WTC11 (cell line): ENCODE measurements at regions of chr5 and their contacts with region 1.

Region 1: DNA sequence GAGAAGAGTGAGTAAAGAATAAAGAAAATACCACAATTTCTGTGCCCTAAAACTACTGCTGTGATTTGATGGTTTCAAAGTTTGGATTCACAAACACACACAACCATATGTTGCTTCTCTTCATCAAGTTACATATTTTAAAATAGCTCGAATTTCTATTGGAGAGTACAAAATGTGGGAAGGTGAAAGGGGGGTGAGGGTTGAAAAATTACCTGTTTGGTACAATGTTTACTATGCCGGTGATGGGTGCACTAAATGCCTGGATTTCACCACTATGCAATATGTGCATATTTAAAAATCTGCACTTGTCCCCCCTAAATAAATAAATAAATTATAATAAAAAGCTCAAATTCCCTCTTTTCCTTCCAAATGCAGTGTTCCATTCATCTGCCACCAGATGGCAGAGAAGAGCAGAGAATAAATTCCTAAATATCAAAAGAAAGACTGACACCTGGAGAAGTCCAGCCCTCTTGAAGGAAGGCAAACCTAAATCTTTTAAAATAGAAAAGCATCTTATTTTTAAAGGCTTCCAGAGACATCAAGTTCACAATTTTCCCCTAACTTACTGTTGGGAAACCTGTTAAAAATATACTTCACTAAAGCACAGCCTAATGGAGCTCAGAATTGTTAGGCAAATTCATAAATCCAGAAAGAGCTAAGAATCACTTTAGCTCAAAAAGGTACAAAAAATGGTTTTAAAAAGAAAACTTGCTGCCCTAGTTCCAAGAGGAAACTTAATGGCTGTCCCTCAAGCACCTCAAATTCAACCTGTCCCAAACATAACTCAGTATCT is 24.8 kb upstream of the HNRNPA0 start:
- DNase-seq: no peak
- ATAC-seq: no peak
- H3K4me3 Mint-ChIP-seq: no peak overlapping the region
- H3K27ac Mint-ChIP-seq: no peak overlapping the region
- H3K4me1 Mint-ChIP-seq: no peaks in the 10 kb centered on the region
- H3K27me3 Mint-ChIP-seq: peaks cover 9% of the 10 kb centered on the region
- CTCF ChIP-seq: peak; percentile 57

Region 2: DNA sequence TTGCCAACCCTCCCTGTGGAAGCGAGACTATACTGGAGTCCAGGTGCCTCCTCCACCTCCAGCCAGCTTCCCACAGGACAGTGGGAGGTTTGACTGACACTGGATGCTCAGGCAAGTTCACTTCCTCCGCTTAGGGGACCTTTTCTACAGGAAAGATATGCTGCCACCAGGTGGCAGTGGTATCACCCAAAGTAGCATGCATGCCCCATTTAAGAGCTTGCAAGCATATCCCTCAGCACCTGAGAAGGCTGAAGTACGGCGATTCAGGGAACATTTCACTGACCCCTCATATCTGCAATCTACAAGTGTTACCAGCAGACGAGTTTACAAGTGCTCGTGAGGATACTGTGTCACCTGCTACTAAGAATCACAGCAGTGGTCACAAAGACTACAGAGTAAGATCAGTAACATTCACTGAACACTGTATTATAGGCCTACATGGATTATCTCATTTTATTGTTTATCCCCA is 118.6 kb before region 1 on chr5:
- CTCF ChIA-PET with region 1: interaction called, 10 read pairs
- POLR2A ChIA-PET with region 1: no interaction called
- DNase-seq: peak; percentile 82
- ATAC-seq: peak; percentile 97
- H3K4me3 Mint-ChIP-seq: no peak overlapping the region
- H3K27ac Mint-ChIP-seq: no peak overlapping the region
- H3K4me1 Mint-ChIP-seq: no peaks in the 10 kb centered on the region
- H3K27me3 Mint-ChIP-seq: no peaks in the 10 kb centered on the region
- CTCF ChIP-seq: peak; percentile 71; the same call in 1 of the 2 replicates

Region 3: DNA sequence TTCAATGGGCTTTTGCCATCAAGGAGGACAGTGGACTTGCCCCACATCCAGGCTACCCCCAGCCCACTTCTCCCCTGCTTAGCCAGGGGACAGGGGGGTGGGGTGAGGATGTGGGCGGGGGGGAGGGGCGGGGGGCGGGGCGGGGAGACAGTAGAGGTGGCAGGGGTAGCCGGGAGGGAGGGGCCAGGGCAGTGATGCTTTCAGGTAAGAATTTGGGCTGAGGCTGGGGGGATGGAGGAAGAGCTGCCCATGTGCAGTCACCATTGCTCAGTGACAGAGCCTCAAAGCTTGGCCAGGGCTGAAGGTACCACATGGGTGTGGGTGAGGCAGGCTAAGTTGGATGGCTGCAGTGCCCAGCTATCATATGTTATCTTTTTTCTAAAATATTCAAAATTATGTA is 15.9 kb after region 1 on chr5:
- CTCF ChIA-PET with region 1: interaction called, 22 read pairs
- POLR2A ChIA-PET with region 1: no interaction called
- DNase-seq: peak; percentile 44
- ATAC-seq: peak; percentile 93
- H3K4me3 Mint-ChIP-seq: no peak overlapping the region
- H3K27ac Mint-ChIP-seq: no peak overlapping the region
- H3K4me1 Mint-ChIP-seq: no peaks in the 10 kb centered on the region
- H3K27me3 Mint-ChIP-seq: no peaks in the 10 kb centered on the region
- CTCF ChIP-seq: no peak

Region 4: DNA sequence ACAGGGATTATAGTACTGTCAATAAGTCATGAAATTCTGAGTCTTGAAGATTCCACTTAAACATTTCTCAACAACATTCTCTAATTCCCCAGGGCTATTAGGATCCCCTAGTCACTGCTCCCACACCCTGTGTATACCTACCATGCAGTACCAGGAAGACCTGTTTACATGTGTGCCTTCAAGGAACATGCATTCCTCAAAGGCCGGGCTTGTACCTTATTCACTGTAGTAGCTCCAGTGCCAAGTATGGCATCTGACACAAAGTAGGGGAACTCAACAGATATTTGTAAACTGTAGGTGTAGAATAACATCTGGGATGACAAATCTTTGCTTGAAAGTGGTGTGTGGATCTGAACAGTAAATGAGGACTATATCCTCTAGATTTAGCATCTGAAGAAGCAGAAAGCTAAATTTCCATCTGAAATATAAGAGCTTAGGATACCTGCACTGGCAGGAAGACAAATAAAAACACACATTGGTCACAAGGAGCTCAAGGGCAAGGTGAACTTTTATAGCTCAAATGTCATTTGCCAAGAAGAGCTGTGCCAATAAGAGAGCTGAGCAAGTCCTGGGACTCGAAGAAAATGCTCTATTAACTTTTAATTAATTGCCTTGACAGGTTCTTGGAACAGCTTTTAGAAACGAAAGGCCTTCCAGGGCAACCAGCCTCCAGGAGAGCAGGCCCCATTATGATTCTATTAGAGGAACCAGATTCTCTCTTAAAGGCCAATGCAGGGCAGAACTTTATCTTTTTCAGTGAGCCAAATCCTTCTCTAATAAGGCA is 36.4 kb after region 1 on chr5:
- CTCF ChIA-PET with region 1: interaction called, 19 read pairs
- POLR2A ChIA-PET with region 1: no interaction called
- DNase-seq: no peak
- ATAC-seq: no peak
- H3K4me3 Mint-ChIP-seq: no peak overlapping the region
- H3K27ac Mint-ChIP-seq: no peak overlapping the region
- H3K4me1 Mint-ChIP-seq: no peaks in the 10 kb centered on the region
- H3K27me3 Mint-ChIP-seq: no peaks in the 10 kb centered on the region
- CTCF ChIP-seq: no peak

Region 5: DNA sequence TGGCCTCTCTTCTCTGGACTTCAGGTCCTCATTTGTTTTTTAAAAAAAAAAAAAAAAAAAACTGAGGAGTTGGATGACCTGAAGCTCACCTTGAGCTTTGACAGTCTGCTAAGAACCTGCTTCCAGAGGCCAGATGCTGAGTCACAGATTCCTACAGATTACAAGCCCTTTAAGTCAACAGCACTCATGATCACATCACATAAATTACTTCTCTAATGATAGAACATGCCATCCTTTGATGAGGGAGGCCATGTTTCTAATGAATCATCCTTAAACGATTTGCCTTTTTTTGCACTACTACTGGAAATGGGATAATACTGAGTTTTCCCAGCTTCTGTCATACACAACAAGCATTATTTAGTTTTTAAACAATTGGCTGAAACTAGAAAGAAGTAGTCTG is 54.5 kb after region 1 on chr5:
- CTCF ChIA-PET with region 1: interaction called, 14 read pairs
- POLR2A ChIA-PET with region 1: no interaction called
- DNase-seq: no peak
- ATAC-seq: peak; percentile 62
- H3K4me3 Mint-ChIP-seq: no peak overlapping the region
- H3K27ac Mint-ChIP-seq: no peak overlapping the region
- H3K4me1 Mint-ChIP-seq: peaks cover 23% of the 10 kb centered on the region
- H3K27me3 Mint-ChIP-seq: no peaks in the 10 kb centered on the region
- CTCF ChIP-seq: no peak

Region 6: DNA sequence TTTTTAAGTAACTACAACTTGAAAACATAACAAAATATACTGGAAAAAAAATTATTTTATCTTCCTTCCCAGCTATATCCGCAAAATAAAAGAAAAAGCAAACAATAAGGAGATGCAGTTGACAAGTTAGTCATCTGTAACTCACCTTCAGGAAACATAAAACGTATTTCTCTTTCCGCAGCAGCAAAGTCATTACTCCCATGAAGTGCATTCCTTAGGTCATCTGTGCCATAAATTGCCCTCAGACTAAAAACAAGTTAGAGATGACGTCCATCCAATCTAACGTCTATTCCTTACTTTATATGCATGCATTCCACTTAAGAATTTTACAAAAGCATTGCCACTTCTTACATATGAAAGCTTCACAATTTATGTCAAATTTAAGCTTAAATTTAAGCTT is 349.4 kb after region 1 on chr5:
- CTCF ChIA-PET with region 1: interaction called, 18 read pairs
- POLR2A ChIA-PET with region 1: no interaction called
- DNase-seq: no peak
- ATAC-seq: no peak
- H3K4me3 Mint-ChIP-seq: no peak overlapping the region
- H3K27ac Mint-ChIP-seq: no peak overlapping the region
- H3K4me1 Mint-ChIP-seq: 0 out of 2 replicates have a peak, but pooled peaks cover 2% of the 10 kb centered on the region
- H3K27me3 Mint-ChIP-seq: no peaks in the 10 kb centered on the region
- CTCF ChIP-seq: no peak